Activated CD4-positive, alpha-beta memory T cell treated with anti-CD3 and anti-CD28 coated beads for 36 hours (primary cell): ENCODE measurements at regions of chr18 and their contacts with region 1.

Region 1: DNA sequence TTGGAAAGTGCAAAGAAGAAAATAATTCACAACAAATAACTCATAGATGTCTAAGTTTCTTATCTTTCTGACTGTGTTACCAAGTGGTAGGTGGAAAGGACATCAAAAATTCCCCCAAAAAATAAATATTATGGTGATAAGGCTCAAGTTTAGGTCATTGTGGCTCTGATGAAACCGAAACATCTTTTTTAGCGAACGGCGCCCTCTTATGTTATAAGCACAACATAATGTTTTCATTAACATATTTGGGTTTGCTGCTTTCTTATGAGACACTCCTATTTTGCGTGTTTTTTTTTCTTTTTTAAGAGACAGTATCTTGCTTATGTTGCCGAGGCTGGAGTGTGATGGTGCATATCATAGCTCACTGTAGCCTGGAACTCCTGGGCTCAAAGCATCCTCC is 38.6 kb upstream of the SLC35G4 start:
- DNase-seq: no peak
- H3K4me3 Mint-ChIP-seq: no peak overlapping the region
- H3K27ac Mint-ChIP-seq: no peak overlapping the region
- H3K4me1 Mint-ChIP-seq: no peaks in the 10 kb centered on the region
- H3K27me3 Mint-ChIP-seq: no peaks in the 10 kb centered on the region

Region 2: GRCh38 chr18:11324956-11325873 is 245.6 kb before region 1 on chr18:
- CTCF ChIA-PET with region 1: no interaction called
- POLR2A ChIA-PET with region 1: no interaction called
- intact Hi-C with region 1: loop called (anchors 10 kb)
- DNase-seq: peak; percentile 22
- H3K4me3 Mint-ChIP-seq: no peak overlapping the region
- H3K27ac Mint-ChIP-seq: no peak overlapping the region
- H3K4me1 Mint-ChIP-seq: no peaks in the 10 kb centered on the region
- H3K27me3 Mint-ChIP-seq: peaks cover 1% of the 10 kb centered on the region